ENCODE measurements at regions of chr12 and their contacts with region 1.

Region 1: GRCh38 chr12:27305673-27306456 is 26.8 kb upstream of the BMAL2 start:
- DNase-seq: no peak
- H3K4me3 Mint-ChIP-seq: no peak overlapping the region
- H3K27ac Mint-ChIP-seq: no peak overlapping the region
- H3K4me1 Mint-ChIP-seq: no peaks in the 10 kb centered on the region
- H3K27me3 Mint-ChIP-seq: no peaks in the 10 kb centered on the region

Region 2: GRCh38 chr12:25992026-25992782 is 1313.7 kb before region 1 on chr12:
- CTCF ChIA-PET with region 1: no interaction called
- POLR2A ChIA-PET with region 1: no interaction called
- intact Hi-C with region 1: no loop called
- DNase-seq: no peak
- H3K4me3 Mint-ChIP-seq: no peak overlapping the region
- H3K27ac Mint-ChIP-seq: no peak overlapping the region
- H3K4me1 Mint-ChIP-seq: no peaks in the 10 kb centered on the region
- H3K27me3 Mint-ChIP-seq: peaks cover 9% of the 10 kb centered on the region

Region 3: DNA sequence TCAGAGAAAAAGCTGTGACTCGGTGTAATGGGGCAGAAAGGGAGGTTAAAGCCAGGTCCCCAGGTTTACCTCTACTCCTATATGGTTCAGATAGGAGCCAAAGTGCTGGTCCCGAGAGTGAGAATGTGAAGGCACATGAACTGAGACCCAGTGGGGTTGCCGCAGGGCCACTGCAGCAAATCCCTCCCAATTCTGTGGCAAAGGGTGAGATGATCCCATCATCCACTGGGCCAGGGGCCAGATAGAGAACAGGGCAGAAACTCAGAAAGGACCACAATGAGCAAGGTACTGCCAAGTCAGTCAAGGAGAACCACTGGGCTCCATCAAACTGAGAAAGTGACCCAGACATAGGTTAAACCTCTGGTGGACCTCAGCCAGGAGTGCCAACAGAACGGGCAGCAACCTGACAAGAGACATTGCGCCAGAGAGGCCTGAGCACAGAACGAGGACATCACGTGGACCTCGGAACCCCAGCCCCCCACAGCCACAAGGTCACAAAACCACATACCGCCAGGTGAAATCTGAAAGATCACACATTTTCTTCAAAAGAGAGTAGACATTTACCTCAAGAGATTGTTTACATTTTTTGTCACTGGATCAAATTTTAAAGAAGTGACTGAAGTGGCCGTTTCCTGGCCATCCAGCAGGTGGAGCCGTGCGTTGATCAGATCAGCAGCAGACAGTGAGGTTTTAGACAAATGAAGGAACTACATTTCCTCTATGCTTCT is 452.4 kb before region 1 on chr12:
- CTCF ChIA-PET with region 1: interaction called, 3 read pairs
- POLR2A ChIA-PET with region 1: no interaction called
- intact Hi-C with region 1: loop called (anchors 1 kb)
- DNase-seq: peak; percentile 82
- H3K4me3 Mint-ChIP-seq: no peak overlapping the region
- H3K27ac Mint-ChIP-seq: no peak overlapping the region
- H3K4me1 Mint-ChIP-seq: no peaks in the 10 kb centered on the region
- H3K27me3 Mint-ChIP-seq: peaks cover 4% of the 10 kb centered on the region

Region 4: GRCh38 chr12:27034607-27035293 is 271.1 kb before region 1 on chr12:
- CTCF ChIA-PET with region 1: interaction called, 30 read pairs
- POLR2A ChIA-PET with region 1: no interaction called
- intact Hi-C with region 1: no loop called
- DNase-seq: no peak
- H3K4me3 Mint-ChIP-seq: no peak overlapping the region
- H3K27ac Mint-ChIP-seq: no peak overlapping the region
- H3K4me1 Mint-ChIP-seq: no peaks in the 10 kb centered on the region
- H3K27me3 Mint-ChIP-seq: no peaks in the 10 kb centered on the region

Region 5: GRCh38 chr12:27243804-27244683 is 61.8 kb before region 1 on chr12 and contains the start of gene STK38L:
- CTCF ChIA-PET with region 1: interaction called, 8 read pairs
- POLR2A ChIA-PET with region 1: interaction called, 4 read pairs
- intact Hi-C with region 1: loop called (anchors 2 kb)
- DNase-seq: peak; percentile 98
- H3K4me3 Mint-ChIP-seq: peak within 1 kb of the TSS; percentile 100
- H3K27ac Mint-ChIP-seq: peak within 1 kb of the TSS; percentile 91
- H3K4me1 Mint-ChIP-seq: peaks cover 45% of the 10 kb centered on the region
- H3K27me3 Mint-ChIP-seq: no peaks in the 10 kb centered on the region
- total RNA-seq, gene STK38L: 25.1 to 25.2 TPM

Region 6: GRCh38 chr12:27284751-27285150 is 21.1 kb before region 1 on chr12:
- CTCF ChIA-PET with region 1: interaction called, 11 read pairs
- POLR2A ChIA-PET with region 1: no interaction called
- intact Hi-C with region 1: no loop called
- DNase-seq: no peak
- H3K4me3 Mint-ChIP-seq: no peak overlapping the region
- H3K27ac Mint-ChIP-seq: no peak overlapping the region
- H3K4me1 Mint-ChIP-seq: no peaks in the 10 kb centered on the region
- H3K27me3 Mint-ChIP-seq: no peaks in the 10 kb centered on the region

Measured in activated CD4-positive, alpha-beta memory T cell treated with anti-CD3 and anti-CD28 coated beads for 36 hours (primary cell).